SK-N-SH (cell line): ENCODE measurements at regions of chr7 and their contacts with region 1.

Region 1: DNA sequence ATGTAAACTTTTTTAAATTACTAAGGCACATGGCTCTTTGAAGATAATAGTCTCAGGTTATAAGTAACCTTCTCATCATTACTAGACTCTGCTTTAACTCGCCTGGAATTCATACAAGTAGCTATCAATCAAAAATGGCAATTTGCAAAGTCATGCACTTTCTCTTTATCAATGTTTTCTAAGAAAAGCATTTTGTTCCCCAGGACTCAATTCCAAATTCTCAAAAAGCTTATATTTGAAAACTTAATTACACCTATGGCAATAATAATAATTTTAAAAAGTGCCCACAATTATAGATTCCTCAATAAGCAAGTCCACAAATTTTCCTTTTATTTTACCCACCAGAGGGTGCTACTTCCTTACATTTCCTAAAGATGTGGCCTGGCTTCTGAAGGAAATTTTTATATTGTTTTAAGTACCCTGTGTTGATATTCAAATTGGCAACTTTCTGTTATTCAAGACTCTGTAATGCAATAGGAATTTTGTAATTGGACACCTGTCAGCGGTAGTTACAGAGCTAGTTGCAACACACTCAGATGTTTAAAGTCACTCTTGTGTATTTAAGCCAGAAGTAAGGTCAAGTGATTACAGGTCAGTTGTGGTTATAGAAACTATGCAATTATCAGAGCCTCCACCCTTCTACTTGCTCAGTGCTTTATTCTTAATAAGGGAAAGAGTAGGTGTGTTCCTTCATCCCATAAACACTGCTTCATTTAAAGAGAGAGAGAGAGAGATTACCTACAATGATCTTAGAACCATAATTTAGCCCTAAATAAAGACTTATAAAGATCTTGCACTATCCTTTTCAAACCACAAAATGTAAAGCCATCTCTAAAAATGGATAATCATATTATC is 47.1 kb upstream of the HYAL4 start:
- DNase-seq: peak; percentile 40
- H3K4me3 ChIP-seq: no peak overlapping the region
- H3K27ac ChIP-seq: no peak overlapping the region
- H3K4me1 ChIP-seq: no peaks in the 10 kb centered on the region
- H3K27me3 ChIP-seq: no peaks in the 10 kb centered on the region
- CTCF ChIP-seq: peak; percentile 84
- EP300 ChIP-seq: no peak
- RAD21 ChIP-seq: peak; percentile 91

Region 2: GRCh38 chr7:123748734-123749536 is 49.0 kb before region 1 on chr7 and contains the start of gene WASL:
- CTCF ChIA-PET with region 1: interaction called, 17 read pairs
- POLR2A ChIA-PET with region 1: no interaction called
- DNase-seq: peak; percentile 99
- H3K4me3 ChIP-seq: peak within 1 kb of the TSS; percentile 94 to 100
- H3K27ac ChIP-seq: peak within 1 kb of the TSS; percentile 96 to 100
- H3K4me1 ChIP-seq: peaks cover 27 to 57% of the 10 kb centered on the region in 2 experiments; a peak in 3 of 4 replicates
- H3K27me3 ChIP-seq: no peaks in the 10 kb centered on the region
- CTCF ChIP-seq: no peak
- EP300 ChIP-seq: peak; percentile 26 to 72; a peak in 2 of 4 replicates
- RAD21 ChIP-seq: peak; percentile 19; the same call in 1 of the 2 replicates
- polyA plus RNA-seq, gene WASL: 8.5 and 9.9 TPM in 2 replicates

Region 3: DNA sequence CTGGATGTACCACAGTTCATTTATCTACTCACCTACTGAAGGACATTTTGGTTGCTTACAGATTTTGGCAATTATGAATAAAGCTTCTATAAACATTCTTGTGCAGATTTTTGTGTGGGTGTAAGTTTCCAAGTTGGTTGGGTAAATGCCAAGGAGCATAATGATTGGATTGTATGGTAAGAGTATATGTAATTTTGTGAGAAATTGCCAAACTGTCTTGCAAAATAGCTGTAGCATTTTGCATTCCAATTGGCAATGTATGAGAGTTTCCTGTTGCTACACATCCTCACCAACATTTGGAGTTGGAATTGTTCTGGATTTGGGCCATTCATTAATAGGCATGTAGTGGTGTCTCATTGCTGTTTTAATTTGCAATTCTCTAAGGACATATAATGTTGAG is 13.2 kb after region 1 on chr7:
- CTCF ChIA-PET with region 1: interaction called, 26 read pairs
- POLR2A ChIA-PET with region 1: no interaction called
- DNase-seq: no peak
- H3K4me3 ChIP-seq: no peak overlapping the region
- H3K27ac ChIP-seq: no peak overlapping the region
- H3K4me1 ChIP-seq: no peaks in the 10 kb centered on the region
- H3K27me3 ChIP-seq: no peaks in the 10 kb centered on the region
- CTCF ChIP-seq: no peak
- EP300 ChIP-seq: no peak
- RAD21 ChIP-seq: no peak

Region 4: DNA sequence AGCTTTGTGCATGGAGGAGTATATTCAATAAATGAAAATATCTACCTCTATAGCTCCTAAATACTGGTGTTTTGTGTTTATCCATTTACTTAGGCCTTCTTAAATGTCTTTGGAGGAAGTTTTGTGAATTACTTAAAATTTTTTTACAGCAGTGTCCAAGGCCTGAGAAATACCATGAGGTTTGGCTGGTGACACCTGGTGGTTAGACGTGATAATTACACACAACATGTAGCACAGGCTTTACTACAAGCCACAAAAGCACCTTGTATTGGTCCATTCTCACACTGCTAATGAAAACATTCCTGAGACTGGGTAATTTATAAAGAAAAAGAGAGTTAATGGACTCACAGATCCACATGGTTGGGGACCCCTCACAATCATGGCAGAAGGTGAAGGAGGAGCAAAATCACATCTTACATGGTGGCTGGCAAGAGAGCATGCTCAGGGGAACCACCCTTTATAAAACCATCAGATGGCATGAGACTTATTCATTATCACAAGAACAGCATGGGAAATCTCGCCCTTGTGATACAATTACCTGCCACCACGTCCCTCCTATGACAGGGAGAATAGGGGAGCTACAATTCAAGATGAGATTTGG is 67.7 kb after region 1 on chr7:
- CTCF ChIA-PET with region 1: interaction called, 127 read pairs
- POLR2A ChIA-PET with region 1: no interaction called
- DNase-seq: peak; percentile 49
- H3K4me3 ChIP-seq: no peak overlapping the region
- H3K27ac ChIP-seq: no peak overlapping the region
- H3K4me1 ChIP-seq: no peaks in the 10 kb centered on the region
- H3K27me3 ChIP-seq: no peaks in the 10 kb centered on the region; the same call in 1 of the 2 replicates
- CTCF ChIP-seq: peak; percentile 92
- EP300 ChIP-seq: no peak
- RAD21 ChIP-seq: peak; percentile 82

Region 5: DNA sequence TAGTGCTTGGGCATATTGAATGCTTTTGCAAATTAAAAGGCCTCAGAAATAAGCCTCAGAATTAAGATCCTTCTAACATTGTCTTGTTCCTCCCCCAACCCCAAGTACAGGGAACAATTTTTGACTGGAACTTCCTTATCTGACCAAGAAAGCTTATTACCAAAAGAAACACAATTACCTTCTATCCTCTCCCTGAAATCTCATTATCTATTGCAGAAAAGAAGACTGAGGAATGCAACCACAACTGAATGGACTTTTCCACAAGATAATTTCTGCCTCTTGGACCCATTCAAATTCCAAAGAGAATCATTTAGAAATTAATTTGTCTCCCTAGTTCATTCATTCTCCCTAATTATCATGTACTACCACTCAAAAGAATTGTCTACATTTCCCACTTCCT is 90.3 kb after region 1 on chr7:
- CTCF ChIA-PET with region 1: interaction called, 10 read pairs
- POLR2A ChIA-PET with region 1: no interaction called
- DNase-seq: no peak
- H3K4me3 ChIP-seq: no peak overlapping the region
- H3K27ac ChIP-seq: no peak overlapping the region
- H3K4me1 ChIP-seq: no peaks in the 10 kb centered on the region
- H3K27me3 ChIP-seq: no peaks in the 10 kb centered on the region
- CTCF ChIP-seq: no peak
- EP300 ChIP-seq: no peak
- RAD21 ChIP-seq: no peak

Region 6: DNA sequence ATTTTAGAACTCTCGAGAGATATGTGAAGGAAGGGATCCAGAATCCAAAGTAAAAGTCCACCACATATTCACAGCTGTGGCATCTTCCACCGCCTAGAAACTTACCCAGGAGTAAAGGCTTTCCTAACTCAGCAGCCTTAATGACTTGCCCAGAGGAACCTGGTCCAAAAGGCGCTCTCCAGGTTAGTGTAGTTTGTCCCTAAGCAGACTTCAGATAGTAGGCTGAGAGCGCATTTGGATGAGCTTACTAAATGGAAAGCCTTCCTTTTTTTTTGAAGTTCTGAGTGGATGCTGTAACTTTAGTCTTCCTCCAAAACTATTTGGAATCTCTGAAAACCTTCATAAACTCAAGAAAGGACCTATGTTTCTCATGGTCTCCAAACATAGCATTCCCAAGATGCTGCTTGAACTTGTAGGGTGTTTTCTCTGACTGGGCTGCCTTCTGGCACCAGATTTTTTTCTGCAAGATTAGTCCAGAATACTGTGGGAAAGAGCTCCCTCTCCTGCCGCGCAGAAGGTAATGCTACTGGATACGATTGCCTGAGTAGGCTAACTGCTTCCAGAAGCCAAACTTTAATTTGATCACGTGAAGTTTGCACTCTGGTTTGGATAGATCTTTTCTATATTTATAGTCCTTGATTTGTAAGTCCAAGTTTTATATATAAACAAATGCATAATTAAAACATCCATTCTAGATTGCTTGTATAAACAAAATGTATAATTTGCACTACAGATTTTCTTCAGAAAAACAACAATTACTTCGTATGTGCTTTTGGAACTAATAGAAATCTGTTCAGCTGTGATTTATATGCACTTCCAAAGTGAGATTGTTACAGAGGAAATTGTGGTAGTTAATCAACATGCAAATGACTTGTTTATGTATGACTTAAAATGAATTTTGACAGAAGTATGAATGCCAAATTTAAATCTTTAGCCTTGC is 987.2 kb after region 1 on chr7:
- CTCF ChIA-PET with region 1: interaction called, 15 read pairs
- POLR2A ChIA-PET with region 1: no interaction called
- DNase-seq: peak; percentile 76
- H3K4me3 ChIP-seq: no peak overlapping the region; a peak in 1 of 4 replicates
- H3K27ac ChIP-seq: no peak overlapping the region
- H3K4me1 ChIP-seq: no peaks in the 10 kb centered on the region
- H3K27me3 ChIP-seq: no peaks in the 10 kb centered on the region
- CTCF ChIP-seq: peak; percentile 98
- EP300 ChIP-seq: no peak; a peak in 1 of 4 replicates
- RAD21 ChIP-seq: peak; percentile 100